ENCODE measurements at regions of chr7 and their contacts with region 1.

Region 1: GRCh38 chr7:1432411-1433082 is 26.7 kb downstream of the MICALL2 start:
- DNase-seq: peak in 9 of 10 donors; percentile 40 to 93 (median 74)

Region 2: GRCh38 chr7:1473864-1474512 is 41.4 kb after region 1 on chr7:
- intact Hi-C with region 1: loop called (anchors 5 kb)
- DNase-seq: peak; percentile 75 to 98 (median 90)

Measured in posterior cingulate gyrus (tissue), 11 donors.